Endothelial cell of umbilical vein (primary cell): ENCODE measurements at regions of chr3 and their contacts with region 1.

Region 1: DNA sequence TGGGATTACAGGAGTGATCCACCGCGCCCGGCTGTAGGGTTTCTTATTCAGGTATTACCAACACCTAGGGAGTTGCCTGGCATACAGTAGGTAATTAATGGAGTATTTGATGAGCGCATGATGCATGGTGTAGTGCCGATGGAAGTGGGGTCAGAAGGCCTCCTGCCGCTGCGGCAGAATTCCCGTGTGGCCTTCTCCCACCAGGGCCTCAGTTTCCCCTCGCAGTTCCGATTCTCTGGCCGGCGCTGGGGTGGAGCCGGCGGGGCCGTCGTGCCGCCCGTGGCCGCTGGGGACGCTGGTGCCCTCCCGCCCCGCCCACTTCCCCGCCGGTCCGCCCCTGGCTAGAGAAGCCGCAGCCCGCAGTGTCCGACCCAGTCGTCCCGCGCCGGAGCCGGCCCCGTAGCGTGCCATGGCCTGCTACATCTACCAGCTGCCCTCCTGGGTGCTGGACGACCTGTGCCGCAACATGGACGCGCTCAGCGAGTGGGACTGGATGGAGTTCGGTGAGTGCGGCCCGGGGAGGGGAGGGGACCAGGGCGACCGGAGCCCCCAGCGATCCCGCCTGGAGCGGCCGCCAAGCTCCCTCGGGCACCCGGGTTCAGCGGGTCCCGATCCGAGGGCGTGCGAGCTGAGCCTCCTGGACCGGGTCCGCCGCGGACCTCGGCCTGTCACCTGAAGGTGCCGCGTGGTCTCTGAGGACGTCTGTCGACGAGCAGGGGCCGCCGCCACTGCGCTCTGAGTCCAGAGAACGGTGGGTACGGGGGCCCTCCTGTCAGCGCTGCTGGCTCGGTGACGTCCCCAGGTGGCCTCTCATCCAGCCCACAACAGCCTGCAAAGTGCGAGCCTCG is at the start of gene IRAK2:
- DNase-seq: peak; percentile 66
- H3K4me3 ChIP-seq: peak within 1 kb of the TSS; percentile 63 to 79 (median 78)
- H3K27ac ChIP-seq: peak within 1 kb of the TSS; percentile 42
- H3K4me1 ChIP-seq: peaks cover 2% of the 10 kb centered on the region
- H3K27me3 ChIP-seq: no peaks in the 10 kb centered on the region
- CTCF ChIP-seq: peak; percentile 40 to 79
- POLR2A ChIP-seq: peak; percentile 75
- total RNA-seq, gene IRAK2: 10.0 and 11.1 TPM in 2 replicates

Region 2: DNA sequence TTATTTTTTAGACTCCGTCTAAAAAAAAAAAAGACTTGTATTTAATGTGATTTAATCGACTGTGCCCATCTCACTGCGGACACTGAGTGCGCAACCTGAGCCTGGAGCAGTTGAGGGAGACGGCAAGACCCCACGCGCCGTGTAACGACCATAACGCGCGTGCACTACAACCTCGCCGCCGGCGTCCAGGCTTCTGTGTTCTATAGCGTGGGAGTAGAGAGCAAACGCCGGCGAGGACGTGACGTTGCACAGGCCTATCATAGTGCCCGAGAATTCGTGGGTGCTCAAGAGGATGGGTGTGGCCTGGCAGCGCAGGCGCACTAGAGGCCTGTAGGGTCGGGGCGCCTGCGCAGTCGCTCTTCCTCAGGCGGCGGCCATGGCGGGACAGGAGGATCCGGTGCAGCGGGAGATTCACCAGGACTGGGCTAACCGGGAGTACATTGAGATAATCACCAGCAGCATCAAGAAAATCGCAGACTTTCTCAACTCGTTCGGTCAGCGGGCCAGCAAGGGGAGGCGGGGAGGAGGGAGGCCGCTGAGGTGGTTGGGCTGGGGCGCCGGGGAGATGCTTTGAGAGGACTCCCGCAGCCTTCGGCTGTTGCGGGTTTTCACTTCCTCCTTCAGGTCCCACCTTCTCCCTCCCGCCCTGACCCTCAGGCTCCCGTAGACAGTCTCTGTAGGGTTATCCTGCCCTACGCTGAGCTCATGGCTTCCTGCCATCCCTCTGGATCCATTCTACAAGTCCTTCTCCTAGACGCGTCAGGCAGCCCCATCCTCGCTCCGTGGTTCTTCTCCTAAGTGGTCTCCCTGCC is 49.2 kb before region 1 on chr3 and contains the start of gene BRK1:
- CTCF ChIA-PET with region 1: no interaction called
- POLR2A ChIA-PET with region 1: no interaction called
- dilution Hi-C with region 1: no loop called
- intact Hi-C with region 1: loop called (anchors 2 kb)
- DNase-seq: peak; percentile 96
- H3K4me3 ChIP-seq: peak within 1 kb of the TSS; percentile 63 to 87 (median 68)
- H3K27ac ChIP-seq: peak within 1 kb of the TSS; percentile 63
- H3K4me1 ChIP-seq: peaks cover 9% of the 10 kb centered on the region
- H3K27me3 ChIP-seq: no peaks in the 10 kb centered on the region
- CTCF ChIP-seq: no peak
- POLR2A ChIP-seq: peak; percentile 98
- total RNA-seq, gene BRK1: 123 and 133 TPM in 2 replicates